ENCODE measurements at regions of chr5 and their contacts with region 1.

Region 1: DNA sequence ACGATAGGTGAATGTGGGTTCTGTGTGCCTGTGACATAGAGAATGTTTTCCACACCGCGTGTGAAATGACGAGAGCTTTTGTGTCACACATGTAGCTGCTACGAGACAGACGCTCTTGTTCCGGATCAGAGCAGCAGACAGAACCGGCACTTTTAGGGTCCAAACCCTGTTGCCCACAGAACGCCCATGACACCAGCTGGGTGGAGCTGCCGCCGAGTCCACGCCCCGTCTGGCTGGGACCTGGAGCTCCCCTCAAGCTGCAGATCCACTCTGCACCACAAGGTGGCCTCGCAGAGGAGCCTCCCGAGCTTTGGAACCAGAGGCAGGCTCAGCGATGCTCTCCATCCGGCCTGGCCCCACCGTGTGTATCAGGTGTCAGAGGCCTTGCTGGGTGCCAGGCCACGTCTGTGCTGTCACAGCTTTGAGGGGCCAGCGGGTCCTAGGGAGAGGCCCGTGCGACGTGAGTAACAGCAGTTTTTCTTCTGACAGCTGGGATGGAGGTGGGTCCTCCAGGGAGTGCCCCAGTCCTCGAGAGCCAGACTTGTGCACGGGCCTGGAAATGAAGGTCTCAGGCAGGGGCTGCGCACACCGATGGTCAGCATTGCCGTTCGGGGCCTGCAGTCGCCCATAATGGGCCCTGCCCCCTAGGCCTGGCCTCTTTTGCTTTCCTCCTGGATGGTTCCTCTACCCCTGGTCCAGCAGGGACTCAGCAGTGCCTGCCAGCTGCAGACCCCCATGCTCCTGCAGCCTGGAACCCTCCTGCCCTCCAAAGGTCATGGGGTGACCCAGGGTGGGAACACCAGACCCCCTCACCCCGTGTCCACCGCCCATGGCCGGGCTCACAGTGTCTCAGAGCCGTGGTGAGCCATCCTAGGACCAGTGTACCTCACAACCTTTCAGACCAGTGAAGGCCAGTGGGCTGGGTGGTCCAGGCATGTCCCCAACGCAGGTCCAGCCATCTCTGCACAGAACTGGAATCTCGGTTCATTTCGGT is 2.5 kb upstream of the LRRC14B start:
- DNase-seq: peak; percentile 77
- ATAC-seq: peak; percentile 99
- H3K4me3 ChIP-seq: no peak overlapping the region
- H3K27ac ChIP-seq: no peak overlapping the region
- H3K4me1 ChIP-seq: no peaks in the 10 kb centered on the region
- H3K27me3 ChIP-seq: peaks cover 12% of the 10 kb centered on the region; the same call in 1 of the 2 replicates
- CTCF ChIP-seq: peak; percentile 84
- POLR2A ChIP-seq: no peak
- RAD21 ChIP-seq: peak; percentile 80

Region 2: GRCh38 chr5:82097-82496 is 106.7 kb before region 1 on chr5:
- CTCF ChIA-PET with region 1: no interaction called
- POLR2A ChIA-PET with region 1: no interaction called
- dilution Hi-C with region 1: no loop called
- in situ Hi-C with region 1: no loop called
- intact Hi-C with region 1: no loop called
- DNase-seq: peak; percentile 17
- ATAC-seq: peak; percentile 92
- H3K4me3 ChIP-seq: no peak overlapping the region
- H3K27ac ChIP-seq: no peak overlapping the region
- H3K4me1 ChIP-seq: peaks cover 6% of the 10 kb centered on the region; the same call in 1 of the 2 replicates
- H3K27me3 ChIP-seq: peaks cover 41% of the 10 kb centered on the region
- CTCF ChIP-seq: no peak
- POLR2A ChIP-seq: no peak
- RAD21 ChIP-seq: no peak

Region 3: GRCh38 chr5:167982-168660 is 20.7 kb before region 1 on chr5:
- CTCF ChIA-PET with region 1: interaction called, 19 read pairs
- POLR2A ChIA-PET with region 1: no interaction called
- dilution Hi-C with region 1: no loop called
- in situ Hi-C with region 1: no loop called
- intact Hi-C with region 1: no loop called
- DNase-seq: peak; percentile 99
- ATAC-seq: peak; percentile 79
- H3K4me3 ChIP-seq: no peak overlapping the region
- H3K27ac ChIP-seq: peak overlapping the region; percentile 38
- H3K4me1 ChIP-seq: peaks cover 19% of the 10 kb centered on the region
- H3K27me3 ChIP-seq: no peaks in the 10 kb centered on the region
- CTCF ChIP-seq: no peak
- POLR2A ChIP-seq: peak; percentile 34; the same call in 1 of the 2 replicates
- RAD21 ChIP-seq: no peak

Region 4: DNA sequence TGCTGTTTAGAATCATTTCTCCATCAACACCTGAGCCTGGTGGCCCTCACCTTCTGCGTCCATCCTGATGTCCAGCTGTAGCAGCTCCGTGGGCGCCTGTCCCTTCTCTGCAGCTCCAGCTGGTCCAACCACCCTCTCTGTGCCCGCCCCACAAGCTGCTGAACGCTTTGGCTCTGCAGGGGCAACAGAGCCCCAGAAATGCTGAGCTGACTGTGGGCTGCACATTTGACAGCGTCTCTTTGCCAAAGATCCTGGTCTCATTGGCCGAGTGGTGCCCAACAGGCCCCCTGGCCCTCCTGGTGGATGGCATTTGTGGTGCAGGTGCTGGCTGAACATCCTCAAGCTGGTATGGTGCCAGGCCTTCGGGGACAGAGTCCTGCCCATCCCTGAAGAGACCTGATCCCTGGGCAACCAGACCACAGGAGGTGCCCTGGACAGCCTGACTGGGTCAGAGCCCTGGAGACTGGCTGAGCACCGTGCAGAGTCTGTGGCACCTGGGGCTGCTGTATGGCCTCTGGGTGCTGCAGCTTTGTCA is 398.0 kb after region 1 on chr5:
- CTCF ChIA-PET with region 1: no interaction called
- POLR2A ChIA-PET with region 1: no interaction called
- dilution Hi-C with region 1: no loop called
- in situ Hi-C with region 1: no loop called
- intact Hi-C with region 1: no loop called
- DNase-seq: no peak
- ATAC-seq: no peak
- H3K4me3 ChIP-seq: no peak overlapping the region
- H3K27ac ChIP-seq: no peak overlapping the region
- H3K4me1 ChIP-seq: no peaks in the 10 kb centered on the region
- H3K27me3 ChIP-seq: peaks cover 22% of the 10 kb centered on the region
- CTCF ChIP-seq: no peak
- POLR2A ChIP-seq: no peak
- RAD21 ChIP-seq: no peak